Dorsolateral prefrontal cortex (tissue), 120 donors: ENCODE measurements at regions of chr12 and their contacts with region 1.

Region 1: DNA sequence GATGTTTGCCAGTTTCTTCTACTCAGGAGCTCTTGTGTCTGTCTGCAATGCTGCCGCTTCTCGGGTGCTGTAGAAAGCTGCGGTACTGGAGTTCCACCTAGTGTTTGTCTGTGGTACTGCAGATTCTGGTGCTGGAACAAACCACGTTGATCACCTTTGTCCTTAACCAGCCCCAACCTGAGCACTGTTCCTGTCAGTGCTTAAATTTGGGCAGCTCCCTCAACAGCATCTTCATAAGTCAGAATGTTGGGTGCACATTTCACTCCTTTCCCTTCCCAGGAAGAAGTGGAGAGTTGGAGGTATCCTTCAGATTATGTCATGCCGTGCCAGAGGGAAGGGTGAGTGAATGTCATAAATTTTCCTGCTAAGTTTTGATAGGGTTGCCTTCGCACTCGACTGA is 48.7 kb upstream of the LALBA start:
- DNase-seq: peak; percentile 41 to 80 (median 73)
- H3K4me3 ChIP-seq: no peak overlapping the region
- H3K27ac ChIP-seq: no peak overlapping the region
- H3K27me3 ChIP-seq: peaks cover 0 to 10% (median 0%) of the 10 kb centered on the region in 45 donors
- CTCF ChIP-seq: peak in 55 of 56 donors; percentile 86 to 100 (median 98)

Region 2: GRCh38 chr12:48542300-48542928 is 76.1 kb before region 1 on chr12:
- intact Hi-C with region 1: loop called (anchors 1 to 2 kb)
- DNase-seq: peak in 4 of 10 donors; percentile 33 to 69 (median 44)
- H3K4me3 ChIP-seq: no peak overlapping the region
- H3K27ac ChIP-seq: no peak overlapping the region
- H3K27me3 ChIP-seq: no peaks in the 10 kb centered on the region
- CTCF ChIP-seq: peak in 55 of 56 donors; percentile 14 to 91 (median 61)